Activated B cell treated with CpG ODN at 0.5 μM for 24 hours (primary cell): ENCODE measurements at regions of chr2 and their contacts with region 1.

Region 1: GRCh38 chr2:197255543-197255942 is 55.0 kb downstream of the ANKRD44 start:
- DNase-seq: peak; percentile 74
- ATAC-seq: peak; percentile 95
- H3K4me3 Mint-ChIP-seq: peak overlapping the region; percentile 77
- H3K27ac Mint-ChIP-seq: peak overlapping the region; percentile 94
- H3K4me1 Mint-ChIP-seq: peaks cover 78% of the 10 kb centered on the region
- H3K27me3 Mint-ChIP-seq: no peaks in the 10 kb centered on the region
- CTCF ChIP-seq: no peak

Region 2: DNA sequence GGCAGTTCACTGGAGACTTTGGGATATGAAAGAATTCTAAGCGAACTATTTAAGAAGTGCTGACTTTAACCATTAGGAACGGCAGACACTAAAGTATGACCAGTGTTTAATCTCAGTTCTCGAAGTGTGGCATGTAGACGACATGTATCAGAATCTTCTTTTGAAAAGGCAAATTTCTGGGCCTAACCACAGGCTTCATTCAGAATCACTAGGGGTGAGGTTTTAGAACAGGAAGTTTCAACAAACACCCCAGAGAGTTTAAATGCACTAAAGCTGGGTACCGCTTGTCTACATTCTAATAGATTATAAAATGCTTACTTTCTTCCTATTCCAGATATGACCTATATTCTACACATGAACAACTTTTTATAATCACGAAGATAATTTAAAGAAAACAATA is 125.2 kb before region 1 on chr2:
- CTCF ChIA-PET with region 1: no interaction called
- POLR2A ChIA-PET with region 1: no interaction called
- intact Hi-C with region 1: loop called (anchors 1 kb)
- DNase-seq: no peak
- ATAC-seq: peak; percentile 69
- H3K4me3 Mint-ChIP-seq: peak overlapping the region; percentile 82
- H3K27ac Mint-ChIP-seq: peak overlapping the region; percentile 98
- H3K4me1 Mint-ChIP-seq: peaks cover 71% of the 10 kb centered on the region
- H3K27me3 Mint-ChIP-seq: no peaks in the 10 kb centered on the region
- CTCF ChIP-seq: no peak

Region 3: DNA sequence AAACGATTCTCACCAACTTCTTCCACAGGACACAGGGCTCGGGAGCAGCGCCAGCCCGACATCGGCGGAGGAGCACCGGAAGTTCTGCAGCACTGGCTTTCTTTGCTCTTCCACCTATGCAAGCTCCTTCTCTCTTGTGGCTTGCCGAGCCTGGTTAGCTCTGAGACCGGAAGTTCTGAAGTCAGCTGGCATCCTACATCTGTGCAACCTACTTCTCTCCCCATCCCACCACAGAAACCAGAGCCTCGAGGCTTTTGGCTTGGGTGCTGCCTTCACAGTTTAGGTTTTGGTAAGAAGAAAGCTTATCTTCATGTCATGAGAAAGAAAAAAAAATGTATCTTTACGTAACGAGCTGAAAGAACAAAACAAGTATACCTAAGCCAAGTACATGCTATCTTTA is 56.7 kb before region 1 on chr2:
- CTCF ChIA-PET with region 1: interaction called, 6 read pairs
- POLR2A ChIA-PET with region 1: interaction called, 36 read pairs
- intact Hi-C with region 1: loop called (anchors 1 kb)
- DNase-seq: peak; percentile 56
- ATAC-seq: peak; percentile 94
- H3K4me3 Mint-ChIP-seq: peak overlapping the region; percentile 88
- H3K27ac Mint-ChIP-seq: peak overlapping the region; percentile 96
- H3K4me1 Mint-ChIP-seq: peaks cover 83% of the 10 kb centered on the region
- H3K27me3 Mint-ChIP-seq: no peaks in the 10 kb centered on the region
- CTCF ChIP-seq: no peak

Region 4: DNA sequence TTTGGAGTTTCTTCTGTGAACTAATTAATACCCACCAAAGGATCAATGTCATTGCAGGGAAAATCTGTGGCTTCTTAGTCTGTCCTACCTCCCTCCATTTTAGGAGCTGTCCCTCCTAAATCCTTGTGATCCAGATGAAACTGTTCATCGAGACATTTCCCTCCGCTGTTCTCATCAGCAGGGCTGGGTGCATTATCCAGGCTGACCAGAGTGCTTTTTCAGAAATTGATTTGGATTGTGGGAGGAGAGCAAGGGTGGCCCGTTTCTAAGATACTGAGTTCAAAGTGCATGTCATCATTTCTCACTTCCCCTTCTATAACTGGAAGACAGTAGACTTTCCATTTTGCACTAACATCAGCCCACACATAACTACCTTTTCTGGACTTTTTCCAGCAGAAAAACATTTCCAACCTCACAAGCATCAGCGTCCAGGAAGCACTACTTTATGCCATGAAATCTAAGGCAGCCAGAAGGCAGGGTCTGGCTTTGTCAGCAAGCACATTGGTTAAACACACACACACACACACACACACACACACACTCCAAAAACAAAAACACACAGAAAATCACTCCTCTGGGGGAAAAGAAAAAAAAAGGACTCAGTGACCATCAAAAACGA is 39.1 kb before region 1 on chr2:
- CTCF ChIA-PET with region 1: no interaction called
- POLR2A ChIA-PET with region 1: interaction called, 9 read pairs
- intact Hi-C with region 1: loop called (anchors 1 kb)
- DNase-seq: no peak
- ATAC-seq: peak; percentile 71
- H3K4me3 Mint-ChIP-seq: peak overlapping the region; percentile 72
- H3K27ac Mint-ChIP-seq: peak overlapping the region; percentile 98
- H3K4me1 Mint-ChIP-seq: peaks cover 91% of the 10 kb centered on the region
- H3K27me3 Mint-ChIP-seq: no peaks in the 10 kb centered on the region
- CTCF ChIP-seq: no peak

Region 5: GRCh38 chr2:197293252-197294007 is 37.9 kb after region 1 on chr2:
- CTCF ChIA-PET with region 1: no interaction called
- POLR2A ChIA-PET with region 1: interaction called, 21 read pairs
- intact Hi-C with region 1: loop called (anchors 1 kb)
- DNase-seq: no peak
- ATAC-seq: peak; percentile 41
- H3K4me3 Mint-ChIP-seq: peak overlapping the region; percentile 78
- H3K27ac Mint-ChIP-seq: peak overlapping the region; percentile 96
- H3K4me1 Mint-ChIP-seq: peaks cover 91% of the 10 kb centered on the region
- H3K27me3 Mint-ChIP-seq: no peaks in the 10 kb centered on the region
- CTCF ChIP-seq: no peak